H1 (cell line): ENCODE measurements at regions of chr20 and their contacts with region 1.

Region 1: GRCh38 chr20:40990542-40991120 is 38.0 kb upstream of the TOP1 start:
- DNase-seq: peak; percentile 70 to 79
- H3K4me3 ChIP-seq: no peak overlapping the region
- H3K27ac ChIP-seq: no peak overlapping the region
- H3K4me1 ChIP-seq: peaks cover 0 to 3% (median 1%) of the 10 kb centered on the region in 4 experiments; a peak in 4 of 7 replicates
- H3K27me3 ChIP-seq: no peaks in the 10 kb centered on the region
- CTCF ChIP-seq: peak; percentile 75 to 93 (median 86)
- EP300 ChIP-seq: no peak
- POLR2A ChIP-seq: no peak
- RAD21 ChIP-seq: peak; percentile 85 to 92

Region 2: DNA sequence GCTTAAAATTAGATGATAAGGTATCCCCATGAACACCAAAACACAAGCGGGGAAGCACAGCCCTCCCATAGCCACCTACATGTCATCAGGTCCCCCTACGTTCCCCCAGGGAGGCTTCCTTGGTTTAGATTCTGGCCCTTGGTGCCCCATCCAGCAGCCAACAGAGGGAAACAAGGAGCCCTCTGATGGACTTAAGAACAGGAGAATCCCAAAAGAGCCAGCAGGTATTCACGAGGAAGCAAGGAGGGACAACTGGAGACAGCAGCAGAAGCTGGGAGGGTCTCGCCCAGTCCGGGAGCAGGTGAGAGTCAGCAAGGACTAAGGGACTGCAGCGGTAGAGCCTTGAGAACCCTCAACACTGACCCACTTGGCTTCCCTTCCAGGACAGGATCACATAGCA is 20.4 kb before region 1 on chr20:
- CTCF ChIA-PET with region 1: interaction called, 31 read pairs
- POLR2A ChIA-PET with region 1: no interaction called
- DNase-seq: peak in 1 of 2 experiments; percentile 41
- H3K4me3 ChIP-seq: no peak overlapping the region
- H3K27ac ChIP-seq: no peak overlapping the region
- H3K4me1 ChIP-seq: peaks cover 0 to 3% (median under 1%) of the 10 kb centered on the region in 4 experiments; a peak in 3 of 7 replicates
- H3K27me3 ChIP-seq: no peaks in the 10 kb centered on the region
- CTCF ChIP-seq: no peak
- EP300 ChIP-seq: no peak
- POLR2A ChIP-seq: no peak
- RAD21 ChIP-seq: no peak

Region 3: DNA sequence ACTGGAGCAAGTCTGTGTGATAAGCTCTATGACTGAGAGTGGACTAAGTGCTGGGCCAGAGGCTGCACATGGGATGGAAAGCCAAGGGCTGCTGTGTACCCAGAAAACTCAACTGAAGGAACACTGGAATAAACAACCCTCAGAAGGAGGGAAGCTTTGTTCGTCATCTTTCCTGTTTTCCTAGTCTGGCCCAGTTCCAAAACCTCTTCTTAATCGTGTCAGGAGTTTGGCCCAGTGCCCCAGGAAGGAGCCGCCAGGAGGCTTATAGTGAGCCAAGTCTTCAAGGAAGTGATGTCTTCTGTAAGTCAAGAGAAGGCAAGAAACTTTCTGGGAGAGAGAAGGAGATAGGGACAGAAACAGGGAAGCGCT is 14.7 kb after region 1 on chr20:
- CTCF ChIA-PET with region 1: interaction called, 38 read pairs
- POLR2A ChIA-PET with region 1: interaction called, 3 read pairs
- DNase-seq: no peak
- H3K4me3 ChIP-seq: no peak overlapping the region
- H3K27ac ChIP-seq: no peak overlapping the region
- H3K4me1 ChIP-seq: peaks cover 0 to 14% (median 3%) of the 10 kb centered on the region in 4 experiments; a peak in 3 of 7 replicates
- H3K27me3 ChIP-seq: no peaks in the 10 kb centered on the region
- CTCF ChIP-seq: no peak
- EP300 ChIP-seq: no peak
- POLR2A ChIP-seq: no peak
- RAD21 ChIP-seq: no peak

Region 4: GRCh38 chr20:41048461-41049301 is 58.0 kb after region 1 on chr20:
- CTCF ChIA-PET with region 1: interaction called, 17 read pairs
- POLR2A ChIA-PET with region 1: no interaction called
- DNase-seq: no peak
- H3K4me3 ChIP-seq: peak overlapping the region in 1 of 4 experiments; percentile 3; a peak in 1 of 8 replicates
- H3K27ac ChIP-seq: no peak overlapping the region
- H3K4me1 ChIP-seq: peaks cover 5 to 25% (median 11%) of the 10 kb centered on the region in 4 experiments; a peak in 4 of 7 replicates
- H3K27me3 ChIP-seq: no peaks in the 10 kb centered on the region
- CTCF ChIP-seq: no peak
- EP300 ChIP-seq: no peak
- POLR2A ChIP-seq: no peak
- RAD21 ChIP-seq: no peak

Region 5: DNA sequence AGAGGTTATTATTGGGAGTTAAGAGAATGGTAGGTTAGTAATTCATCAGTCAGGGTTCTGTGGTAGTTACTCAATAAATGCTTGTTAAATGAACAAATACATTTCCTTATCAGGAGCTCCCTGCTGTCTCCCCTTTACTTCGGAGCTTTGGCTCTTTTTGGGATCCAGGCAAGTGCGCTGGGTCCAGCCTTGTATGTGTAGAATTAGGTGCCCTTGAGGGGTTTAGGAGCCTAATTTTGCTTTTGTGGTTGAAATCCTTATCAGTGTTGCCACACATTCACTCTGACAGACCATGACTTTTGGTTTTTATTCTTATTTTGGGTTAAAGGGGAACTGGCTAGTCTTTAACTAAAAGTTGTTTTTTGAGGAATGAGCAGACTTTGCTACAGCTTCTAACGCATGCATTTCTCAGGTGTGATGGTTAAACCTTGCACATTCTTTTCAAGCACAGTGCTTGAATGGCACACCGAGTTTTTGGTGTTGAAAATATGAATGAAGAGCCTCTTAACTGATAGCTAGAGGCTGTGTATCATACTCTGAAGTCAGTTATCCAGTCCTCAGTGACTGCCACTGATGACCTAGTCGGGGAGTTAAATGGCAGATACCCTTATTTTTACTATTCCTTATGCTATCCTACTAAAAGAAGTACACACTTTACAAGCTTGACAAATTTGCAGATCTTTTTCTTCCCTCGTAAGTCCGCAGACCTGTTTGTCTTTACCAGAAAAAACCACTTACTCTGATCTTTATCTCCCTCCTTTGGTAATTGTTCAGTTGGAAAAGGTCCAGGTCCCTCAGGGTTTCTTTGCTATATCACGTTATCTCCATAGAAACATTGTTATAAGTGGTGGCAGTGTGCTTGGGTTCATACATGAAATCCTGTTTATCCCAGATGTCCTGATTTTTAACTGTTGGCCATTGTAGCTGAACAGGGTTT is 96.0 kb after region 1 on chr20:
- CTCF ChIA-PET with region 1: interaction called, 48 read pairs
- POLR2A ChIA-PET with region 1: no interaction called
- DNase-seq: no peak
- H3K4me3 ChIP-seq: no peak overlapping the region
- H3K27ac ChIP-seq: no peak overlapping the region
- H3K4me1 ChIP-seq: no peaks in the 10 kb centered on the region
- H3K27me3 ChIP-seq: no peaks in the 10 kb centered on the region
- CTCF ChIP-seq: no peak
- EP300 ChIP-seq: no peak
- POLR2A ChIP-seq: no peak
- RAD21 ChIP-seq: no peak